Heart left ventricle (tissue), 16 donors: ENCODE measurements at regions of chr1 and their contacts with region 1.

Region 1: GRCh38 chr1:108125312-108126138 is 74.6 kb downstream of the SLC25A24 start:
- DNase-seq: peak in 4 of 5 donors; percentile 52 to 78 (median 66)
- ATAC-seq: peak; percentile 75 to 96 (median 92)
- H3K4me3 ChIP-seq: no peak overlapping the region
- H3K27ac ChIP-seq: no peak overlapping the region
- H3K4me1 ChIP-seq: peaks cover 0 to 19% (median 5%) of the 10 kb centered on the region in 12 donors
- H3K27me3 ChIP-seq: no peaks in the 10 kb centered on the region
- CTCF ChIP-seq: peak; percentile 87 to 97 (median 94)
- POLR2A ChIP-seq: no peak

Region 2: DNA sequence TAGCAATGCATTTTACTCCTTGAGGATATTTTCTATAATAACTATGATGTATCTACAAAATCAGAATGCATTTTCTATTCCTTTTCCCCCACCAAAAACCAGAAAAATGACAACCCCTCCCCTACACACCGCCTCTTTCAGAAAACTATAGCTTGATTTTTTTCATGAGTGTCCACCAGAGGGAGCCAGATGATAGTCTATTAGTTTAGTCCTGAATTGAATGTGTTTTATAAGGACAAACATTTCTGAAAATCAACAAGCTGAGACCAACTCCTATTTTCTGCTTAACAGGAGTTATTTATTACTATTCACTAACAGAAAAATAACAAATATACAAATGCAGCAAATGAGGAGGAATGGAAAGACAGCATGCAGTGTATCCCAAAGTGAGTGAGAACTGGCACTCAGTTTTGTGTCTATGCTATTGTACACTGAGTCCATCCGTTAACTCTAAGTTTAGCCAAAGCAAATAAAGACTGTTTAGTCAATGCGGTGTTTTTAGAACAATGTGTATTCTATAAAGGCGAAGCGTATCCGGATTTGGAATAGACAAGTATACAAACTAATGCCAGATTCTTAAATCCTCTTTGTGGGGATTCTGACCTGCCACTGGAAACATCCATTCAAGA is 343.2 kb before region 1 on chr1:
- intact Hi-C with region 1: loop called (anchors 1 to 2 kb)
- DNase-seq: peak in 2 of 5 donors; percentile 43
- ATAC-seq: peak in 3 of 4 donors; percentile 36 to 50 (median 49)
- H3K4me3 ChIP-seq: no peak overlapping the region
- H3K27ac ChIP-seq: no peak overlapping the region
- H3K4me1 ChIP-seq: peaks cover 0 to 34% (median 2%) of the 10 kb centered on the region in 12 donors
- H3K27me3 ChIP-seq: no peaks in the 10 kb centered on the region
- CTCF ChIP-seq: peak; percentile 65 to 85 (median 74)
- POLR2A ChIP-seq: no peak

Region 3: DNA sequence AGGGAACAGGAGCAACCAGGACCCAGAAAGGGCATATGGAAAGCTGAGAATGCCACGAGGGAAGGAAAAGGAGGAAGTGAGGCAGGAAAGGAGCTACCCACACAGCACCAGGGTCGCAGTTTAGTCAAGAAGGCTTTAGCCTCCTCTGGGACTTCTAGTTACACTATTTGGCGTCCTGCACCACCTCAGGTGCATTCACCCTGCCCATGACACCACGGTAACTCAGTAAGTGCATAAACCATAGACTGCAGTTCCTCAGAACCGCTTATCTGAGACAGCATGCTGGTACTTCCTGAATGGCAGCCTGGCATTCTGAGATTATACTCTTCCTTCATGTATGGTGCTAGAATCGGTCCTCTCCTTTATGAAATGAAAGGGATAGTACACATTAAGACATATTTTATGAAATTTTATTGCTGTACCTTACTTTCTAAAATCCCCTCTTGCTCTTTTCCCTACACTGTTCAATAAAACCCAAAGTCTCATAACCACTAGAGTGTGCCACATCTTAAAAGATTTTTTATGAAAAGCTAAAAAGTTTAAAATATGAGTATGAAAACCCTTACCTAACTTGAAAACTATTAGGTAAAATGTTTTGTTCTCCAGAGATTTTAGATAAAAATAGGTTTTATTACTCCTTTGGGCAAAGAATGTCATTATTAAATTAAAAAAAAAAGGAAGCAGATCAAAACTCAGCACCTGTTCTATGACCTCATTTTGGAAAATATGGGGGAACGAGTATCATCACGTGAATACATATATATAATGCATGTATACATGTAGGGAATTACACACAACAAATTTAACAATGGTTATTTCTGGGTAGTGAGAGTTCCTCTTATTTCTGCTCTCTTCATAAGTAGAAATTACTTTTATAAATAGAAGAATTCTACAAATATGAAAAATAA is 227.8 kb before region 1 on chr1:
- intact Hi-C with region 1: loop called in 1 of 10 experiments (anchors 5 kb)
- DNase-seq: no peak
- ATAC-seq: no peak
- H3K4me3 ChIP-seq: peak overlapping the region in 1 of 12 donors; percentile 18
- H3K27ac ChIP-seq: peak overlapping the region in 1 of 12 donors; percentile 6
- H3K4me1 ChIP-seq: peaks cover 0 to 37% (median 0%) of the 10 kb centered on the region in 12 donors
- H3K27me3 ChIP-seq: no peaks in the 10 kb centered on the region
- CTCF ChIP-seq: peak in 1 of 12 donors; percentile 17
- POLR2A ChIP-seq: no peak

Region 4: GRCh38 chr1:108000620-108001111 is 124.9 kb before region 1 on chr1:
- intact Hi-C with region 1: loop called in 1 of 10 experiments (anchors 10 kb)
- DNase-seq: peak; percentile 47 to 83 (median 72)
- ATAC-seq: peak in 2 of 4 donors; percentile 60 to 89
- H3K4me3 ChIP-seq: no peak overlapping the region
- H3K27ac ChIP-seq: no peak overlapping the region
- H3K4me1 ChIP-seq: peaks cover 0 to 13% (median 0%) of the 10 kb centered on the region in 12 donors
- H3K27me3 ChIP-seq: no peaks in the 10 kb centered on the region
- CTCF ChIP-seq: no peak
- POLR2A ChIP-seq: no peak

Region 5: DNA sequence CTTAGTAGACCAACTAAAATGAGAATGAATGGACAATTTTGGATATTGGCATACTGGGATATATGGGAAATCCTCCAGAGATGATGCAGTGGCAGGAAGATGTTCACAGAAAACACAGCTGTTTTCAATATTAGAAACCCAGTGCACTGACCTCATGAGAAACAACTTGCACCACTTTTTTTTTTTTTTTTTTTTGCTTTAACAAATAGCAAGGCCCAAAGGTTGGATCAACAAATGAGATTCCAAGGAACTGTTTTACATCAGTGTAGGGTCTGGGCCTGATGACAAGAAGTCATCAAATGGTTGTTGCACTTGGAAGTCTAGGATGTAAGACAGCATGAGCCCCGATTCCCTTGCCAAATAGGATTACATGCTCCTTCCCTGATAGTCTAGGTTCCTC is 36.0 kb before region 1 on chr1:
- intact Hi-C with region 1: no loop called
- DNase-seq: peak in 1 of 5 donors; percentile 9
- ATAC-seq: peak in 2 of 4 donors; percentile 60 to 63
- H3K4me3 ChIP-seq: no peak overlapping the region
- H3K27ac ChIP-seq: no peak overlapping the region
- H3K4me1 ChIP-seq: peaks cover 0 to 4% (median 0%) of the 10 kb centered on the region in 12 donors
- H3K27me3 ChIP-seq: no peaks in the 10 kb centered on the region
- CTCF ChIP-seq: no peak
- POLR2A ChIP-seq: no peak